CD8-positive, alpha-beta memory T cell (primary cell): ENCODE measurements at regions of chr17 and their contacts with region 1.

Region 1: GRCh38 chr17:21108651-21109050 is 18.1 kb upstream of the DHRS7B start:
- DNase-seq: no peak
- H3K4me3 ChIP-seq: no peak overlapping the region
- H3K4me3 Mint-ChIP-seq: no peak overlapping the region
- H3K27ac ChIP-seq: no peak overlapping the region
- H3K27ac Mint-ChIP-seq: no peak overlapping the region
- H3K4me1 ChIP-seq: no peaks in the 10 kb centered on the region
- H3K4me1 Mint-ChIP-seq: no peaks in the 10 kb centered on the region
- H3K27me3 ChIP-seq: no peaks in the 10 kb centered on the region
- H3K27me3 Mint-ChIP-seq: peaks cover 0 to 12% of the 10 kb centered on the region in 2 donors

Region 2: DNA sequence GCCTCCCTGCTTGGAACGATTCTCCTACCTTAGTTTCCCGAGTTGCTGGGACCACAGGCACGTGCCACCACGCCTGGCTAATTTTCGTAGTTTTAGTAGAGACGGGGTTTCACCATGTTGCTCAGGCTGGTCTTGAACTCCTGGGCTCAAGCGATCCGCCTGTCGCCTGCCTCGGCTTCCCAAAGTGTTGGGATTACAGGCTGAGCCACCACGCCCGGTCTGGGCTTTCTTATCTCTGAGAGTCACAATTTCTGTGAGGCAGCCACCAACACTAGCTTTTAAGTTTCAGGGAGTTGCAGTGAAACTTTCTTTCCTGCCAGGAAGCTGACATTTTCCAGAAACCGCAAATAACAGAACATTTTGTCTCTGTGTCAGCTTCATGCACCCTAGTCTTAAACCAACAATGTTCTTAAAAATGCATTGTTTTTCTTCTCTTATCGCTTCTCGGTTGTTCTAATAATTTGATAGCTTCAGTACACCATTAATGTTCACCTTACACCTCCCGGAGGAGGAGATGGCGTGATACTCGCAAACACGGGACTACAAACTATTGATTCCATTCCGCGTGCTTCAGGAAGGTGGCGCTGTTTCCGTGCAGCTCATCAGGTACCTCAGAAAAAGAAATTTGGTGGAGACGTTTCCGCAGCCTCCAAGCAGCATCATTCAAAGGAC is 10.7 kb after region 1 on chr17:
- CTCF ChIA-PET with region 1: interaction called, 11 read pairs
- POLR2A ChIA-PET with region 1: no interaction called
- DNase-seq: peak; percentile 53 to 80 (median 62)
- H3K4me3 ChIP-seq: no peak overlapping the region
- H3K4me3 Mint-ChIP-seq: peak overlapping the region in 2 of 7 donors; percentile 0 to 11
- H3K27ac ChIP-seq: no peak overlapping the region
- H3K27ac Mint-ChIP-seq: peak overlapping the region in 4 of 8 donors; percentile 0 to 83 (median 16)
- H3K4me1 ChIP-seq: peaks cover 7% of the 10 kb centered on the region
- H3K4me1 Mint-ChIP-seq: peaks cover 3 to 11% (median 9%) of the 10 kb centered on the region in 3 donors
- H3K27me3 ChIP-seq: peaks cover 4% of the 10 kb centered on the region
- H3K27me3 Mint-ChIP-seq: peaks cover 0 to 4% of the 10 kb centered on the region in 2 donors